Activated CD4-positive, alpha-beta T cell treated with anti-CD3 and anti-CD28 coated beads for 36 hours (primary cell): ENCODE measurements at regions of chr5 and their contacts with region 1.

Region 1: DNA sequence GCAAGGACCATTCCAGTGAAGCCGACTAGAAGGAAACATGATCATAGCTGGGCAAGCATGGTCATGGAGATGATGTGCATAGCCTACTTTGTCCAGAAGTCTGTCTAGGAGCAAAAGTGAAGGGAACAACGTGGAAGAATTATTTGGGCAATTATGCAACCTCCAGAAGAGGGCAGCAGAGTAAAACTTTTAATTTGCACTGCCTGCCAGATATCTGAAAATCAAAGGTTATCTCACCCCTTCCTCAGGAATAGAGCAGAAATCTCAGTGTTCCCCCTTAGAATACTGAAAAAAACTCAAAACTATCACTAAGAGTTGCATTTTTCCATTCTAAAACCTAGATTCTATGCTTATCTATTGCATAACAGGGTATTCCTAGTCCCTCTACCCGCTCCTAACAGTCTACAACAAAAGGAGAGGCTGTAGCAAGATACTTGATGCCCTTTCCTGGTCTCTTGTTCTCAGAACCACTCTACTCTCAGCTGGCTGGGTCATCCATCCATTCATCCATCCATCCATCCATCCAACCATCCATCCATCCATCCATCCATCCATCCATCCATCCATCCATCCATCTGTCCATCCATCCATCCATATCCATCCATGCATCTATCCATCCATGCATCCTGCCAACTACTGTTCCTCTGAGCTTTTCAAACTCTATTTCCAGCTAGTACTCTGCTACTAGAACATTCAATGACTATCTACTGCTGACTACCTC is 8.4 kb upstream of the SETD9 start:
- DNase-seq: peak; percentile 36
- ATAC-seq: peak; percentile 54
- H3K4me3 Mint-ChIP-seq: no peak overlapping the region
- H3K27ac Mint-ChIP-seq: no peak overlapping the region
- H3K4me1 Mint-ChIP-seq: peaks cover 5% of the 10 kb centered on the region
- H3K27me3 Mint-ChIP-seq: no peaks in the 10 kb centered on the region

Region 2: DNA sequence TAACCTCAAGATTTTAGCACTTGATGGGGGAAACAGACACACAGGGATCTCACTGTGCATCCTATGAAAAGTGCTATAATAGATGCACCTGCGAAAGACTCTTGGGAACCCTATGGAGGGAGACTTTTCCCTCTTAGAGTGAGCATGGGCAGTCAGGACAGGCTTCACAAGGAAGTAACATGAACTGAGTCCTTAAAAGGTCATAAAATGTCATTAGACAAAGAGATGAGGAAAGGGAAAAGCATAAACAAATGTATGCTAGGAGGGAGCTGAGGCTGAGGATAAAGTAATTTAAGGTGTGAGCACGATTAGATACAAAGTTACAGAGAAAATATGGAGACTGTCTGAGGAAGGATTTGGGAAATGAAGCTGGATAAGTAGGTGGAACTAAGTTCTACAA is 111.5 kb after region 1 on chr5:
- CTCF ChIA-PET with region 1: no interaction called
- POLR2A ChIA-PET with region 1: no interaction called
- intact Hi-C with region 1: no loop called
- DNase-seq: no peak
- ATAC-seq: no peak
- H3K4me3 Mint-ChIP-seq: no peak overlapping the region
- H3K27ac Mint-ChIP-seq: no peak overlapping the region
- H3K4me1 Mint-ChIP-seq: no peaks in the 10 kb centered on the region
- H3K27me3 Mint-ChIP-seq: no peaks in the 10 kb centered on the region

Region 3: DNA sequence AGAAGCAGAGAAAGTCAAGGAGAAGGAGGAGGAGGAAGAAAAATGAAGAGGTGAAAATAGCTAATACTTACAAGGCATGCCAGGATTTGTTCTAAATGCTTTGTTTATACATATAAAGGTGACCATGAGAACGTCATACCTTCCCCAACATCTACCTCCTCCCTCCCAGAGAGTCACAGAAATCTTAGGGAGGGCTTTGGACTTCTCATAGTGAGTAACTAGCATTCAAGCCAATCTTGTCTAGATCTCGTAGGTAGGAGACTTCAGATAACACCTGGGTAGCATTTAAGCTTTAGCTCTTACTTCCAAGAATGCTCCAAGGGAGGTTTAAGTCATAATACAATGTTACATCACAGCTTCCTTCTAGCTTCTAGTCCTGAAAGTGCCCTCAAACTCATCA is 236.4 kb after region 1 on chr5:
- CTCF ChIA-PET with region 1: interaction called, 30 read pairs
- POLR2A ChIA-PET with region 1: no interaction called
- intact Hi-C with region 1: loop called (anchors 1 kb)
- DNase-seq: no peak
- ATAC-seq: no peak
- H3K4me3 Mint-ChIP-seq: no peak overlapping the region
- H3K27ac Mint-ChIP-seq: no peak overlapping the region
- H3K4me1 Mint-ChIP-seq: no peaks in the 10 kb centered on the region
- H3K27me3 Mint-ChIP-seq: no peaks in the 10 kb centered on the region

Region 4: GRCh38 chr5:57277085-57277484 is 376.1 kb after region 1 on chr5:
- CTCF ChIA-PET with region 1: interaction called, 4 read pairs
- POLR2A ChIA-PET with region 1: no interaction called
- intact Hi-C with region 1: loop called (anchors 1 to 2 kb)
- DNase-seq: no peak
- ATAC-seq: no peak
- H3K4me3 Mint-ChIP-seq: no peak overlapping the region
- H3K27ac Mint-ChIP-seq: no peak overlapping the region
- H3K4me1 Mint-ChIP-seq: no peaks in the 10 kb centered on the region
- H3K27me3 Mint-ChIP-seq: peaks cover 3% of the 10 kb centered on the region